HEK293 (cell line): ENCODE measurements at regions of chr1 and their contacts with region 1.

Region 1: DNA sequence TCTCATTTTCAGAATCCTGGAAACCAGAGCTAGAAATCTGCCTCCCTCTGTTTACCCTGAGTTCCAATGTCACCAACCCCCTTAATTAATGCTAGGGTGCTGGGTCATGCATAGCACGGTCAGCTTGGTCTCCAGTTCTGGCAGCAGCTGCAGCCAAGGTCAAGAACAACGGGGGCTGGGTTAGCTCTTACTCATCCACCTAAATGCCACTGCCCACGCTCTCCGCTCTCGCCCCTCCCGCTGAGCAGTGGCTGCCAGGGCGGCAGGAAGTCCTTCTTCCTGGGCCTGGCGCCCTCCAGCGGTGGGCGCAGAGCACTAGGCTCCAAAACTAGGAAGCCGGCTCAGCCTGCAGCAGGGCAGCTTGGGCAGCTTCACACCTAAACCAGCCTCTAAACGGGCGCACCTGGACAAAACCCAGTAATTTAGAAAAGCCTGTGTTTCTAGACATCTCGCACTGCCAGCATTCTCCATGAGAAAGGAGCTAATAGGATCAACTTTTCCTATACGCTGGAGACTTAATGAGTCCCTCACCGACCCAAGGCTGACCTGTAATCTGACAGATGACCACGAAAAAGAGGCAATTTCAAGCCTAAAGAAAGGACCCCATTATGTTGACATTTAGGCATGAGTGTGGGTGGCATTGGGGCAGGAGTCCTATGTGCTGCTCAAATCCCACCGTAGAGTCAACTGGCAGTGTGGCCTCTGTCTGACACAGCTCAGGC is 78.3 kb upstream of the LRRN2 start:
- H3K4me3 ChIP-seq: no peak overlapping the region
- H3K27ac ChIP-seq: no peak overlapping the region
- H3K4me1 ChIP-seq: no peaks in the 10 kb centered on the region
- CTCF ChIP-seq: peak; percentile 78

Region 2: DNA sequence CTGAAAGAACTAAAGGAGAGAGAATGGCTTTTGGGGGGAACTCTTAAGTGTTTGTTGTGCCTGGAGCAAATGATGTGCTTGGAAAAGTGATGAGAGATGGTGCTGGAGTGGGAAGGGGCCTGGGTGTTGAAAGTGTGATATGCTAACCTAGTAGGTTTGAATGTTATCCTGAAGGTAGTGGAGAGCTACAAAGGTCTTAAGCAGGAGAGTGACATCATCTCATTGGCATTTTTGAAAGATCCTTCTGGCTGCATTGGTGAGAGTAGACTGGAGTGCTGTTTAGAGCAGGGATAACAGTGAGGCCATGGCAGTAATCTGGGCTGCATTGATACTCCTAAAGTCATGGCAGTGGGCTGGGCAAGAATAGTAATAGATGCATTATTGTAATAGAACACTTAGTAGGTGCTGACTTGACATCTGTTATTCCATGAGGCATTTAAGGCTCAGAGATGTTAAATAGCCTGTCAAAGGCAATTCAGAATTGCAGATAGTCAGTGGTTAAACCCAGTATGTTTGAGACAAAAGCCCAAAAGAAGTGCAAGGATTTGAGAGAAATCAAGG is 203.2 kb before region 1 on chr1:
- CTCF ChIA-PET with region 1: interaction called, 68 read pairs
- POLR2A ChIA-PET with region 1: interaction called, 4 read pairs
- H3K4me3 ChIP-seq: no peak overlapping the region
- H3K27ac ChIP-seq: no peak overlapping the region
- H3K4me1 ChIP-seq: no peaks in the 10 kb centered on the region
- CTCF ChIP-seq: no peak

Region 3: DNA sequence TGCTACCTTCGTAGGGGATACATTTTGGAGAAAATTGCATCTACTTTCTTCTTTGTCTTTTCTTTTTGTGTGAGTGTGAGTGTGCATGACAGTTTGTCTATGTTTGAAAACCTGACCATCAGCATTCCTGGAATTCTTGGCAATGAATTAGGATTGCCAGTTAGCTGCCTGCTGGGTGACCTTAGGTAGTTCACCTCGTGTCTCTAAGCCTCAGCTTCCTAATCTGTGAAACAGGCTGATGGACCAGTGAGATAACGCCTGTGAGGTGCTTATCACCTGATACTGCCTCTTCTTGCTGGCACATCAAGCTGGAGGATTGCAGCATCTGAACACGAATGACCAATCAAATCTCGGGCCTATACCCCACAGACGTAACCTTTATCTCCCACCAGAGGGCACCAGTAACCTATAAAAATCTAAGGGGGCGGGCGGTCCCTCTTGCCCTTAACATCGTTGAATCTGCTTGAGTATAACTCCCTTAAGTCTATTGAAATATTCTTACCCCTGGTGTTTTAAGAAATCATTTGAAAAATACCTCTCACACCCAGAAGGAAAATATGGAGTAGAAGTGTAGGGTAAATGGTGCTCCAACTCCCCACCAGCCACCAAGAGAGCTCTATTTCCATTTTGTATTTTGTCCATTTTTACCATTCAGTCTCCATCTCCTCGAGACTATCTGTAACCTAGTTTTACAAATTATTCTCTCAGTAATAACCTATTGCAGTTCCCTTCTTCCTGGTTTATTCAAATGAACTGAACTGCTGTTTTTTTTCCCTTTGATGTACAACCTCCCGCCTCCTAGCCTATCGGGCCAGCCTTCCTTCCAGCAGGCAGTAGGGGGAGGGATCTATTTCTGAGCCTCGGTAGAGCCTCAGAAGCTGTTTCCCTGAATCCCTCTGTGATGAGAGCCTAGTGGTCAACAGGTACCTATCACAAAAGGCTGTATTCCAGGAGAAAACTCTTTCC is 198.0 kb before region 1 on chr1:
- CTCF ChIA-PET with region 1: interaction called, 68 read pairs
- POLR2A ChIA-PET with region 1: interaction called, 4 read pairs
- H3K4me3 ChIP-seq: no peak overlapping the region
- H3K27ac ChIP-seq: no peak overlapping the region
- H3K4me1 ChIP-seq: no peaks in the 10 kb centered on the region
- CTCF ChIP-seq: 0 out of 2 replicates have a peak, but pooled peaks have one; percentile 47

Region 4: DNA sequence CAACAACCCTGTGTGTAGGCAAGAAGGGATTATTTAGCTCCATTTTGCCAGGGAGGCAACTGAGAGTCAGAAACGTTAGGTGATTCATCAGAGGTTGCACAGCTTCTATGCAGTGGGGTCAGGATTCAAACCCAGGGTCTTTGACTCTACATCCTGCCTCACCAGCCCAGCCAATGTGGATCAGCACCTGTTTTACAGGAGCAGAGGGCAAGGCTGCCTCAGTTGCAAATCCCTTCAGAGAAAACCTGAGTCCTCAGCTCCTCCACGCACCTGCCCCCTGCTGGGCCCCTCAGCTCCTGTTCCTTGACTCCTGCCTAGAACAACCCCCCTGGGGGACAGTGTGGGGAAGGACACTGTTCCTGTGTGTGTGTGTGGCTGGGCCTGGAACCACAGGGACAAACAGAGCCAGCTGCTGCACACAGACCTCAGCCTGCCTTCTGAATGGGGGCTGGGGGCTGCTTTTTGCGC is 139.9 kb before region 1 on chr1:
- CTCF ChIA-PET with region 1: interaction called, 10 read pairs
- POLR2A ChIA-PET with region 1: no interaction called
- H3K4me3 ChIP-seq: no peak overlapping the region
- H3K27ac ChIP-seq: no peak overlapping the region
- H3K4me1 ChIP-seq: no peaks in the 10 kb centered on the region
- CTCF ChIP-seq: peak; percentile 75

Region 5: DNA sequence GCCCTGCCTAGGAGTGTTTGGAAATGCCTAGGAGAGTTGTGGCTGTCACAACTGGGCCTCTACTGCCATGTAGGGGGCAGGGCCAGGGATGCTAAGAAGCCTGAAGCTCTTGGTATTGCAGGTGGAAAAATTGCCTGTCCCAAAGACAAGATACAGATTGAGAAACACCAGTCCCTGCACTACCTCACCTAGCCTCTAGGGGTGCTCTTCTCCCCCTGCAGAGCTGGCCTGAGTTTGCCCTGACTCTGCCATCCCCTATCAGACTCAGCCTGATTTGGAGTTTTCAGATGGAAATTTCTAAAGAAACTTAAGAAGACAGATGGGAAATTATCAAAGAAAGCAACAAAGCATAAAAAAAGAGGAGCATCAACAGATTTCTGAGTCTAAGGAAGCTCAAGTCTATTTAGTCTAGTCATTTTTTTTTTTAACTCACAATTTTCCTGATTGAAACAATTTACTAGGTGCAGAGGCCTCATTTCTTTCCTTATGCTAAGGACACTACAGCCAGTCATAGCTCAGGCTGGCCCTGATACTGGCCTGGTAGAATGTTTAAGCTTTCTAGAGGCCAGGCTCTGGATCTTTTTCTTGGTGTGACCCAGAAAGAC is 16.9 kb before region 1 on chr1:
- CTCF ChIA-PET with region 1: interaction called, 49 read pairs
- POLR2A ChIA-PET with region 1: no interaction called
- H3K4me3 ChIP-seq: no peak overlapping the region
- H3K27ac ChIP-seq: no peak overlapping the region
- H3K4me1 ChIP-seq: no peaks in the 10 kb centered on the region
- CTCF ChIP-seq: peak; percentile 45; the same call in 1 of the 2 replicates

Region 6: DNA sequence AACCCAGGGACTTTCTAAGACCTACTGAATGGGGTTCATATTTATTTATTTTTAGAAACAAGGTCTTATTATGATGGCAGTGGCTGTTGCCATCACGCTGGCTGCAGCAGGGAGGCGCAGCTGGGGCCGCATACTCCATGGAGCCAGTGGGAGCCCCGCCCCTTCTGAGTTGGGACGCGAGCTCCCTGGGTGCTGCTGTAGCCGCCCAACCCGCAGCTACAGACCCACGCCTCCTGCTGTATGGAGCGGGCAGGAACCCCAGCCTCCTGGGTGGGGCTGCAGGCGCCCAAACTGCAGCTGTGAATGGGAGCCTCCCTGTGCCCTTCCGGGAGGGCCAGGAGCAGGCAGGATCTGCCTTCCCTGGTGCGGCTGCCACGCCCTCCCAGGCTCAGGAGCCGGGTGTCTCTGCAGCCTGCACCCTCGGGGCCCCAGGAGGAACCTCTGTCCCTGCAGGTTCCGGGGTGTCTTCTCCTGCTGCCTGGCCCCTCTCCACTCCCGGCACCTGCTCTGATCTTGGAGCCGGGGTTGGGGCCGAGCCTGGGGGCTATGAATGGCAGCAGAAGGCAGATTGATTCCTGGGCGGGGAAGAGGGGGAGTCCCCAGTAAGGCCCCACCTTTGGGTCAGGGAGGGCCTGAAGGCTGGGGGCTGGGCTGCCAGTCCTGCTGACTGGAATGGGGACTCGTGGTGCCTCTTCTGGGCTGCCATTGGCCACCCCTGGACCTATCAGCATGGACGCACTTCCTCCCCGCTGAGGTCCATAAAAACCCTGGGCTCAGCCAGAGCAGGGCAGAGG is 11.8 kb before region 1 on chr1:
- CTCF ChIA-PET with region 1: interaction called, 49 read pairs
- POLR2A ChIA-PET with region 1: no interaction called
- H3K4me3 ChIP-seq: no peak overlapping the region
- H3K27ac ChIP-seq: no peak overlapping the region
- H3K4me1 ChIP-seq: no peaks in the 10 kb centered on the region
- CTCF ChIP-seq: no peak

Region 7: GRCh38 chr1:204791453-204792353 is 27.8 kb after region 1 on chr1:
- CTCF ChIA-PET with region 1: interaction called, 16 read pairs
- POLR2A ChIA-PET with region 1: no interaction called
- H3K4me3 ChIP-seq: no peak overlapping the region
- H3K27ac ChIP-seq: no peak overlapping the region
- H3K4me1 ChIP-seq: no peaks in the 10 kb centered on the region
- CTCF ChIP-seq: peak; percentile 42; the same call in 1 of the 2 replicates

Region 8: DNA sequence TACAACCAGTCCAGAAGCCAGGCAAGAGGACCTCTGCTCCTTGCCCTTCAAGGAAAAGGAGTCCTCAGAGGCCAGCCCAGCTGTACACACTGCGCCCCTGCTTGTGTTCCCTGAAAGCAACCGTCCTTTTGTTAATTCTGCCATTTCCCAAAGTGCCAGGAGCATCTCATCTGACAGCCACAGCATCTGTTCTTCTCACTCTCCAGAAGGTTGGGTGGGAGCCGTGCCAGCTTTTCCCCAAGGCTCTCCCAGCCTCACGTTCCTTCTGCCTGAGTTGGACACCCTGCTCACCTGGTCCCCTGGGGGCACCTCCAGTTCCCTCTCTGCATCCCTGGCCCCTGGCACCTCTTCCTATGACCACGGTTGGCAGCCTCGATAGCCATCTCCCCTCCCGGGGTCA is 268.6 kb after region 1 on chr1:
- CTCF ChIA-PET with region 1: no interaction called
- POLR2A ChIA-PET with region 1: no interaction called
- H3K4me3 ChIP-seq: no peak overlapping the region
- H3K27ac ChIP-seq: no peak overlapping the region
- H3K4me1 ChIP-seq: no peaks in the 10 kb centered on the region
- CTCF ChIP-seq: no peak